Naive thymus-derived CD8-positive, alpha-beta T cell (primary cell): ENCODE measurements at regions of chr6 and their contacts with region 1.

Region 1: DNA sequence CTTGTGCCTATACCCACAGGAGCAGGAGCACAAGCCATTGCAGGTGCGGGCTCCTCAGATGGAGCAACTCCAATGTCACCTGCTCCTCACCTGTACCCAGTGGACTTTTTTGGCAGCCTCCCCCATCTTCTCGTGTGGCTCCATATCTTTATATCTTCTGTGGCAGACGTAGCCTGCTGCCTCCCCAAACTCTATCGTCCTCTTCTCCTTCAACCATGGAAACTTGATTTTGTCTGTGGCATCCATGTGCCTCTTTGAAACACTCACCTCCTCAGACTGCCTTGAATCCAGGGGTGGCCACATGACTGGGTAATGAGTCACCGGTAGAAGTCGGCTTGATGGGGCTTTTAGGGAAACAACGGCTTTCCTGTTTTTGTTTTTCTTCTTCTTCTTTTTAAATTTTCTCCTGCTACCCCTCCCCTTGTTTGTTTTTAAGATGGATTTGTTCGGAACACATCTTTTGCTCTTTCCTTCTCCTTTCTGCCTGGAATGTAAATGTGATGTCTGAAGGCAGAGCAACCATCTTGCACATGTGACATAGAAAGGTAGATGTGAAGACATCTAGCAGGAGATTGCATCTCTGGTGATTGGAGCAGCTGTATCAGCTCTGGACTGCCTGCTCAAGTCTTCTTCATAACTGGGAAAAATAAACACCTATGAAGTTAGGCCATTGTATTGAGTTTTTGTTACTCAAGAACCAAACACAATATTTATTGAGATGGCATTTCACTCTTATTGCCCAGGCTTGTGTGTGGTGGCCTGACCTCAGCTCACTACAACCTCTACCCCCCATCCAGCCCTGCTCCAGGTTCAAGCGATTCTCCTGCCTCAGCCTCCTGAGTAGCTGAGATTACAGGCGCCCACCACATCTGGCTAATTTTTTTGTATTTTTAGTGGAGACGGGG is 69.9 kb upstream of the DDR1 start:
- DNase-seq: peak in 3 of 10 donors; percentile 16 to 69 (median 50)
- ATAC-seq: peak; percentile 70 to 89
- H3K4me3 Mint-ChIP-seq: peak overlapping the region in 6 of 10 donors; percentile 35 to 77 (median 54)
- H3K27ac Mint-ChIP-seq: peak overlapping the region; percentile 5 to 98 (median 62)
- H3K4me1 Mint-ChIP-seq: peaks cover 31 to 77% (median 67%) of the 10 kb centered on the region in 4 donors
- H3K27me3 Mint-ChIP-seq: no peaks in the 10 kb centered on the region

Region 2: DNA sequence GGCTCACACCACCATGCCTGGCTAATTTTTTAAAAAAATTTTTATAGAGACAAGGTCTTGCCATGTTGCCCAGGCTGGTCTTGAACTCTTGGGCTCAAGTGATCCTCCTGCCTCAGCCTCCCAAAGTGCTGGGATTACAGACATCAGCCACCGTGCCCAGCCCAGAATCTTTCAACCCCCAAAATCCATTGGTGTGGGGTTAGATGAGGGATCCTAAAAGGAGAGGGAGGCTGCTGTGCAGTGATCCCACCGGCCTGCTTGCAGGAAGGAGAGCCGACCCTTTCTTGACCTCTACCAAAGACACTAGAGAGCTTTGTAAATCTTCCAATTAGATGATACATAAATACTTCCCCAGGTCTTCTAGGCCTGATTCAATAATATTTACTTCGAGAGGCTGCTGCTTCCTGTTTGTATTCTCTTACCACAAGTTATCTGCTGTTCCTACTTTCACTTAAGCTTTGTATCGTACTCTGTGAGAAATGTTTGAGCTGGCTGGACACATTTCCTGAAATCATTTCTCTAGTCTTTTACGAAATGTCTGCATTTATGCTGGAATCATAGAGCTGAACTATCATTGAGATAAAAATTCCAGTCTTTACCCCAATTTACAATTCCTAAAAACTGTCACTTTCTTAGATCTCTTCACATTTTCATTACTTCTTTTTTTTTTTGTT is 20.7 kb before region 1 on chr6:
- POLR2A ChIA-PET with region 1: interaction called, 16 read pairs
- DNase-seq: peak in 3 of 10 donors; percentile 39 to 60 (median 55)
- ATAC-seq: peak; percentile 95 to 97
- H3K4me3 Mint-ChIP-seq: peak overlapping the region; percentile 51 to 89 (median 78)
- H3K27ac Mint-ChIP-seq: peak overlapping the region; percentile 93 to 99 (median 96)
- H3K4me1 Mint-ChIP-seq: peaks cover 20 to 54% (median 50%) of the 10 kb centered on the region in 4 donors
- H3K27me3 Mint-ChIP-seq: no peaks in the 10 kb centered on the region

Region 3: DNA sequence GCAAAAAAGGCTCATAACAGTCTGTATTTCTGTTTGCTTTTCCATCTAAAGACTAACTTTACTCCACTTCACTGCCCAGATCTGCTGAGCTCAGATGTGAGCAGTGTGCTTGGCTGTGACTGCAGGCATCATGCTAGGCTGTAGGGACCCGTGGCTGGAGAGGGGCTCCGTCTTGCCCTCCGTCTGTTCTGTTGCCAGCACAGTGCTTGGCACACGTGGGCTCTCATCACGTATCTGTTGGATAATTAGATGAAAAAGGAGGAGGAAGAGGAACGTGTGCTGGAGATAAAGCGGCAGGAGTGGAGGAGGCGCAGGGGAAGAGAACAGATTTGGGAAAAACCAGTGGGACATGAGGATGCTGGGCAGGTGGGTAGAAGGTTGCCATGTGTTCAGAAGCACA is 12.4 kb before region 1 on chr6:
- POLR2A ChIA-PET with region 1: interaction called, 13 read pairs
- DNase-seq: no peak
- ATAC-seq: no peak
- H3K4me3 Mint-ChIP-seq: peak overlapping the region in 1 of 10 donors; percentile 29
- H3K27ac Mint-ChIP-seq: no peak overlapping the region
- H3K4me1 Mint-ChIP-seq: peaks cover 8 to 28% (median 20%) of the 10 kb centered on the region in 4 donors
- H3K27me3 Mint-ChIP-seq: no peaks in the 10 kb centered on the region